ENCODE measurements at regions of chr18 and their contacts with region 1.

Region 1: DNA sequence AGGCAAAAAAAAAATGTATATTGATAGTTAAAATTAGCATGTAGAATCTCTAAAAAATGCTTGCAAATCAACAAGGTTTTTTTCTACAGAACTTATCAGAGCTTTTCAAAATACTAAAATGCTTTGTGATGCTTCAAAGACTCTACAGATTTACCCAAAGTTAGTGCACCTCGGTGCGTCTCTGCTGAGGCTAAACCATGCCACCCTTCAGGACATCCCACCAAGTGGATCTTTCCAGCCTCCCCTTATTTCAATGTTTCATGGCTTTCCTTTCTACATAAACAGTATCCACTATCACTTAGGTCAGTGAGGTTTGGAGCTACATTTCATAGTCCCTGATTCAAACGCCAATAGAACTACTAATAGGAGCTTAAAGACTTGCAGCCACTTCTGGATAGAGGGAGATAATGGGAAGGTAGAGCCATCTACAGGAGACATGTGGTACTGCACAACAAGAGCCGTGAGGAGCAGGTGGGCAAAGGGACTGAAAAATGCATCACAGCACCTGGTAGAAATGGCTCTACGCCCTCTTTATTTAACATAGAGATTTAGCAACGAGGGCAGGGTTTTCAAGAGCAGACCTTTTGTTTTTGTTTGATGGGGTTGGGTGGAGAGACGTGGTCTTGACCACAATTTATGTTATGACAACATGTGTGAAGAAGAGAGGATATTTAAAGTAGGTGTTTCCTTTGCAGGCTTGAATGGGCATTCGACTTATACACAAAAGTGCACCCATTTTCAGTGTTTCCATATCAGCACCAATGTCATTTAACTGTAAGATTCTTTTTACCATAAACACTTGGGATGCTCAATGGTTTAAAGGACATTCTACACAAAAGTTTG is 56.1 kb upstream of the SLC35G4 start:
- DNase-seq: peak; percentile 89
- H3K4me3 ChIP-seq: no peak overlapping the region
- H3K27ac ChIP-seq: no peak overlapping the region
- H3K4me1 ChIP-seq: no peaks in the 10 kb centered on the region
- H3K27me3 ChIP-seq: peaks cover 0 to 6% (median 0%) of the 10 kb centered on the region in 4 donors
- CTCF ChIP-seq: peak; percentile 72 to 94 (median 81)
- EP300 ChIP-seq: no peak
- POLR2A ChIP-seq: no peak

Region 2: DNA sequence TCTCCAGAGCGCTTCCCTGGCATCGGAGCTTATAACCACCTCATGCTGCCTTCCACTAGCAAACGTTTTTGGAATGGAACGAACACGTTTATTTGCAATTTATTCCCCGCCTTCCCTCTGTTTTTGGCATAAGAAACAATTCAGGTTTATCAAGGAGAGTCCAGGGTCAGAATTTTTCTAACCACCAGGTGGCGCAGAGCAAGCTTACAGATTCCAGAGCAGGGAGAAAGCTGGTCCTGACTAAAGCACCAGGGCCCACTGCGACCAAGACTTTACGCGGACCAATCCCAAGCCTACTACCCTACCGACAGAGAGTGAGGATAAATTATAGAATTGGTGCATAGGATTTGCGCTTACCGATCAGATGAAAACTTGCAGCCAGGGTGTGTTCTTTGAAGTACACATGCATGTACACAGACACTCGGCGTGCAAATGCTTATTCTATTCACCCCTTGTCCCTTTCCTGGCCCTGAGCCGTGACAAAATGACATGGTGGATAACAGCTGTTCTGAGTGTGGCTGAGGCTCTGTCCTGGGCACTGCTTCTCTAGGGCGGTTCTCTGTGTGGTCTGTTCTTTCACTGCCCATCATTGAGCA is 992.8 kb before region 1 on chr18:
- intact Hi-C with region 1: loop called (anchors 5 kb)
- DNase-seq: no peak
- H3K4me3 ChIP-seq: peak overlapping the region; percentile 30 to 43 (median 32)
- H3K27ac ChIP-seq: no peak overlapping the region
- H3K4me1 ChIP-seq: peaks cover 8 to 24% (median 12%) of the 10 kb centered on the region in 4 donors
- H3K27me3 ChIP-seq: no peaks in the 10 kb centered on the region
- CTCF ChIP-seq: peak; percentile 48 to 81 (median 73)
- EP300 ChIP-seq: no peak
- POLR2A ChIP-seq: no peak

Region 3: GRCh38 chr18:10851824-10852319 is 701.4 kb before region 1 on chr18:
- intact Hi-C with region 1: loop called (anchors 5 kb)
- DNase-seq: no peak
- H3K4me3 ChIP-seq: no peak overlapping the region
- H3K27ac ChIP-seq: no peak overlapping the region
- H3K4me1 ChIP-seq: peaks cover 0 to 6% (median 0%) of the 10 kb centered on the region in 4 donors
- H3K27me3 ChIP-seq: peaks cover 0 to 9% (median 0%) of the 10 kb centered on the region in 4 donors
- CTCF ChIP-seq: peak; percentile 72 to 75 (median 74)
- EP300 ChIP-seq: no peak
- POLR2A ChIP-seq: no peak

Region 4: DNA sequence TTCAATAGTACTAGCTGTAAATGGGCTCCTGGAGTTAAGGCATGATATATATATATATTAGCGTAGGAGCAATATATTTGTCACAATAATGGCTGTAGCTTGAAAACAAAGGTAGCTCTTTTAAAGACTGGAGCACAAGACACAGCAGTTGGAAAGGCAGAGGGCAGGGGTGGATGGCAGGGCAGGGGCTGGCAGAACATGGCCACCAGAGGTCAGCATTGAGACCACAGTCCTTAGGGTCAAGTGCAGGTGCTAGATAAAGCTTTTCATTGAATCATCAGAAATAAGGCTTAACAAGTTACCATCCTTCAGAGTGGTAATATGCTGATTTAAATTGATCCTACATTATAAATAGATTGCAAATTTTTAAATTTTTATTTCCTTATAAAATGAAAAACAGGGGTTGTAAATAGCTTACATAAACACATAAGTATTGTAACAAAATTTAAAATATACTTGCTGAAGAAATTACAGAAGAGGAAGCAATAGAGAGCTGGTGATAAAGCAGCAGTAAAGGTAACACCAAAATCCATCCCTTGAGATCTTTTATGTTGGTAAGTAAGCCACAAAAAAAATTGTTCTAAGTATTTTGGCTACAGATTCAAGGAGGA is 242.7 kb before region 1 on chr18:
- intact Hi-C with region 1: loop called (anchors 10 kb)
- DNase-seq: no peak
- H3K4me3 ChIP-seq: no peak overlapping the region
- H3K27ac ChIP-seq: no peak overlapping the region
- H3K4me1 ChIP-seq: no peaks in the 10 kb centered on the region
- H3K27me3 ChIP-seq: no peaks in the 10 kb centered on the region
- CTCF ChIP-seq: peak; percentile 23 to 53 (median 39)
- EP300 ChIP-seq: no peak
- POLR2A ChIP-seq: no peak